Sigmoid colon (tissue), 7 donors: ENCODE measurements at regions of chr10 and their contacts with region 1.

Region 1: DNA sequence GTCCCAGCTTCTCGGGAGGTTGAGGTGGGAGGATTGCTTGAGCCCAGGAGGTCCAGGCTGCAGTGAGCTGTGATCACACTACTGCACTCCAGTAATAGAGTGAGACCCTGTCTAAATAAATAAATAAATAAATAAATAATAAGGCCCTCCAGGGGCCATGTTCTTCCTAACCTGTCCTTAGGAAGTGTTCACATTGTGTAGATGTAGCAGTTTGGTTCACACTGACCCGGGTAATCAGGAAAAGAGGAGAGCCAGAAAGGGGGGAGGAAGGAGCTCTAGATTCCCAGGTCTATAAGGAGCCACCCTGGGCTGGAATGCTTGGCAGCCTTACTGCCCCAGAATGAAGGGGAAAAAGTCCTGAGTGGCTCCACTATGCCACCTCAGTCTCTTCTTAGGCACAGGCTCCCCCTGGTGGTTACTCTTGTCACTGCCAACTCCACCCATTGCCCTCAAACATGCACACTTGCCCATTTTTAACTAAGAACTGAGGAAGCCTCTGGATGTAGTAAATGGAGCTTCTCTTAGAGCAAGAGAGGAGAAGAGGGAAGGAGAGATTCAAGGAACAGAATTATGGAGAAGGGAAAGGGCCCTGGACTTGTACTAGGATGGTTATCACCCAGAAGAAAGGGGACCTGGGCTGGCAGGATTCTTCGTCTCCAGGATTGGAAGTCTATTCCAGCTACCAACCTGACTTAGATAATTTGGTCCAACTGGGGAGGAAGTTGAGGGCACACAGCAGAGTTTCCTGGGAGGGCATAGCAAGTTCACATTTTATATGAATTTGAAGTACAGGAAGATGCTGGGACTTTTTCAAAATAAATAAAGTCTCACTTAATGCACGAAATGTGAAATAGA is 7.8 kb downstream of the HPS6 start:
- DNase-seq: peak; percentile 88
- H3K4me3 ChIP-seq: no peak overlapping the region
- H3K27ac ChIP-seq: no peak overlapping the region
- H3K4me1 ChIP-seq: peaks cover 0 to 20% (median 9%) of the 10 kb centered on the region in 4 donors
- H3K27me3 ChIP-seq: no peaks in the 10 kb centered on the region
- CTCF ChIP-seq: peak; percentile 73 to 89 (median 81)
- EP300 ChIP-seq: no peak
- POLR2A ChIP-seq: no peak

Region 2: DNA sequence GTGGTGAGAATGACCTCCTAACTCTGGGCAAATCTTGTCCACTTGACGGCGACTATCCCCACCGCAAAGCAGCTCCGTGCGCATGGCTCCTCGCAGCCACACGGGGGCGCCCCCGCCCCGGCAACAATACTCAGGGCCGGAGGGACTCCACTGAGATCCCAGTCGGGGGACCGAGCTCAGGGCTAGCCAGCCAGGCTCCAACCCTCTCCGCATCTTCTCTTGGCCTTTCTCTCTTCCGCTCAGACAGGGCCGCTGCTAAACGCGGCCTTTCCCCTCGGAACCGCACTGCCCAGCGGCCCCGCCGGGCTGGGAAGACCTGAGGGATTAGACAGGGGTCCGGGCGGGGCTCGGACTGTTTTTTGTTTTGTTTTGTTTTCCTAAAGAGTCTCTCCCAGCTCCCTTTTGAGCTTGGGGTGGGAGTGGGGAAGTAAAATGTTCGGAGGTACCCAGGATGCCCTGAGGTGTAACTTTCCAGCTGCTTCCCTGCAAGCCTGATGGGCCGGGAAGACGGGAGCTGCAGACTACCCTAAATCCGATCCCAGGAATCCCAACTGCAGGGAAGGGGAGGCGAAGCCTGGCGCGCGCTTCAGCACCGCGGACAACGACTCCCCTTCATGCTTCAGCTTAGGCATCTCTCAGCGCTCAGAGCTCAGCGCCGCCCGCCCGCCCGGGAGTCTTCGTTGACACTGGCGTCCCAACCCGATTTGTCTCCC is 232.0 kb before region 1 on chr10:
- intact Hi-C with region 1: loop called (anchors 5 kb)
- DNase-seq: peak; percentile 80
- H3K4me3 ChIP-seq: peak overlapping the region in 3 of 4 donors; percentile 26 to 37 (median 37)
- H3K27ac ChIP-seq: no peak overlapping the region
- H3K4me1 ChIP-seq: peaks cover 0 to 38% (median 34%) of the 10 kb centered on the region in 4 donors
- H3K27me3 ChIP-seq: peaks cover 0 to 5% (median 0%) of the 10 kb centered on the region in 3 donors
- CTCF ChIP-seq: peak; percentile 21 to 81 (median 49)
- EP300 ChIP-seq: no peak
- POLR2A ChIP-seq: no peak

Region 3: DNA sequence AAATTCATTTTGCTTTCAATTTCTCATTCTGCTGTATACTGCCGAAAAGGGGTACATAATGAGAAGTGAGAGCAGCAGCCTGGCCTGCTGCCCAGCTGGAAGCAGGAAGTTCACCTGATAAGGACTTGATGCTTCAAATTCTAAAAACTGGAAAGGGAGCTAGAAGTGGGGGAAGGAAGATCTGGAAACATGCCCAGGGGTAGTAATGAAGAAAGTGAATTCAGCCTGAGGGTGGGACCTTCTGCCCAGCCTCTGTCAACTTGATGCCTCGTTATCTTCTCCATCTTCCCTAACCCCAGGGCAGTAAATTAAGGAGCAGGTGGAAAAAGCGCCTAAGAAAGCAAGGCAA is 86.3 kb before region 1 on chr10:
- intact Hi-C with region 1: no loop called
- DNase-seq: no peak
- H3K4me3 ChIP-seq: no peak overlapping the region
- H3K27ac ChIP-seq: no peak overlapping the region
- H3K4me1 ChIP-seq: peaks cover 0 to 3% (median 0%) of the 10 kb centered on the region in 4 donors
- H3K27me3 ChIP-seq: no peaks in the 10 kb centered on the region
- CTCF ChIP-seq: no peak
- EP300 ChIP-seq: no peak
- POLR2A ChIP-seq: no peak